ENCODE measurements at regions of chr10 and their contacts with region 1.

Region 1: DNA sequence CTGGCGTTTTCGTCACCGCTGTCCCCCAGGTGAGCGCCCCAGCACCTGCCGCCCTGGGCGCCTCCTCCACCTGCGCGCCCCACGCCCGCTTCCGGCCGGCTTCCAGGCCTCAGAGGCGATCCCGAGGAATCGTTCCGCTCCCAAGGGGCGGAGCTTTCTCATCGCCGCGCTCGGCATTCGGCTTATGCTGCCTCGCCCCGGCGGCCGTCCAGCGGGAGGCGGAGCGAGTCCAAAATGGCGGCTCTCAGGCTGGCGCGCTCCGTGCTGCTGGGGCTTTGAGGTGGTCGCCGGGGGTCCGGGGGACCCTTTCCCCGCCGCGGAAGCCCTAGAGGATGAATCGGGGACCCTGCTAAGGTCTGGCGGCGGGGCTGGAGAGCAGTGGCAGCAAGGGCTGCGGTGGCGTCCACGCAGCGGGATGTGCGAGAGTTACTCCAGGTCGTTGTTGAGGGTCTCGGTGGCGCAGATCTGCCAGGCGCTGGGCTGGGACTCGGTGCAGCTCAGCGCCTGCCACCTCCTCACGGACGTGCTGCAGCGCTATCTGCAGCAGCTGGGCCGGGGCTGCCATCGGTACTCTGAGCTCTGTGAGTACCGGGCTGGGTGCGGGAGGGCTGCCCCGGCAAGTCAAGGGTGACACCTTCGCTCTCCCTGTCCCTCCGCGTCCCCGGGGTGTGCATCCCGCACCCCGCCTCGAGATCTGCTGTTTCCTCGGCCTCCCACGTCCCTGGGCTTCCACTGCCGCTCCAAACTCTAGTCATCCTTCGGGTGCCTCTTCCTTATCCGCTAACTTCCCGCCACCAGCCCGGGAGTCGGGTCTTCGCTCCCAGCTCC is at the start of gene TAF3:
- DNase-seq: peak; percentile 81 to 95 (median 91)
- ATAC-seq: peak; percentile 93 to 95 (median 95)
- H3K4me3 ChIP-seq: peak within 1 kb of the TSS; percentile 93 to 97
- H3K4me3 Mint-ChIP-seq: peak within 1 kb of the TSS; percentile 97 to 99 (median 97)
- H3K27ac ChIP-seq: peak within 1 kb of the TSS; percentile 47
- H3K27ac Mint-ChIP-seq: peak within 1 kb of the TSS; percentile 84 to 89
- H3K4me1 ChIP-seq: peaks cover 9 to 24% of the 10 kb centered on the region in 2 experiments
- H3K4me1 Mint-ChIP-seq: peaks cover 43 to 47% (median 44%) of the 10 kb centered on the region in 3 donors
- H3K27me3 ChIP-seq: peaks cover 0 to 16% of the 10 kb centered on the region in 2 experiments
- H3K27me3 Mint-ChIP-seq: peaks cover 0 to 2% of the 10 kb centered on the region in 2 donors
- total RNA-seq, gene TAF3: 18.2 to 21.8 (median 20.0) TPM

Region 2: DNA sequence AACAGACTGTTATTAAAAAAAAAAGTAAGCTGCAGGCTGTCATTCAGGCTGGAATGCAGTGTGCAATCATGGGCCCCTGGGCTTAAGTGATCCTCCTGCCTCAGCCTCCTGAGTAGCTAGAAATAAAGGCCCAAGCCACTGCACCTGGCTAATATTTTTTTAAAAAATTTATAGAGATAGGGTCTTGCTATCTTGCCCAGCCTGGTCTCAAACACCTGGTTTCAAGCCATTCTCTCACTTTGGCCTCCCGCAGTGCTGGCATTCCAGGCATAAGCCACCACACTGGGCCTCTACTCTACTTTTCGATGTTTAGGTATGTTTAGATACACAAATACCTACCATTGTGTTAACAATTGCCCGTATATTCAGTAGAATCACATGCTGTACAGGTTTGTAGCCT is 968.1 kb before region 1 on chr10:
- CTCF ChIA-PET with region 1: no interaction called
- POLR2A ChIA-PET with region 1: no interaction called
- DNase-seq: no peak
- ATAC-seq: no peak
- H3K4me3 ChIP-seq: no peak overlapping the region
- H3K4me3 Mint-ChIP-seq: no peak overlapping the region
- H3K27ac ChIP-seq: no peak overlapping the region
- H3K27ac Mint-ChIP-seq: no peak overlapping the region
- H3K4me1 ChIP-seq: no peaks in the 10 kb centered on the region
- H3K4me1 Mint-ChIP-seq: no peaks in the 10 kb centered on the region
- H3K27me3 ChIP-seq: peaks cover 0 to 3% of the 10 kb centered on the region in 2 experiments
- H3K27me3 Mint-ChIP-seq: peaks cover 5 to 13% of the 10 kb centered on the region in 2 donors

Region 3: DNA sequence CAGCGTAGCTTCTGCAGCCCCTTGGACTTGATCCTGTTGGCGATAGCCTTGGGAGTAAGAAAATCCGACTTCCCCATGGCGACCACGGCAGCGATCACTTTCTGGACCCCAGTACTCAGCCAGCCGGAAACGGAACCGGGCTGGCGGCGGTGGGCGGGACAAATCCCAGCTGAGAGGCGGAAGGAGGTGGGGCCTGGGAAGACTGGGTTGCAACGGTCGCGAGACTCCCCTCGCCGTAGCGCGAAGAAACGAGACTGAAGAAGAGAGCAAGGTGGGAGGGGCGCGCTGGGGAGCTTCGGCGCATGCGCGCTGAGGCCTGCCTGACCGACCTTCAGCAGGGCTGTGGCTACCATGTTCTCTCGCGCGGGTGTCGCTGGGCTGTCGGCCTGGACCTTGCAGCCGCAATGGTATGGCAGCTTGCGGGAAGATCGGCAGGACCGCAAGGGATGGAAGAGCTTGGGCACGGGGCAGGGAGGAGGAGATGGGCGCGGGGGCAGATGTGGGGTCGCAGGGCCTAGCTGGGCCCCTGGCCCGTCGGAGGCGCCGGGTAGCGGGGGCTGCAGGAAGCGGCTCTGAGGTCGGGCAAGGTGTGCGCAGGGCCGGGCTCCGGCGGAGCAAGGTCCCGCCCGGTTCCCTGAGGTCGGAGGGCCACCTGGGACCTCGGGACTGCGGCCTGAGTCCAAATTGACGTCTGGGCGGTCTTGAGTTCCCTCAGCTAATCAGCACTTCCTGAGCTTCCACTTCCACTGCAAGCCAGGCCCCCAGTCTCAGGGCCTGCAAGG is 30.5 kb before region 1 on chr10 and contains the starts of genes ATP5F1C and KIN:
- CTCF ChIA-PET with region 1: interaction called in 1 of 2 experiments, 13 read pairs
- POLR2A ChIA-PET with region 1: interaction called, 7 to 23 read pairs
- DNase-seq: peak; percentile 93 to 98 (median 96)
- ATAC-seq: peak; percentile 95 to 97 (median 96)
- H3K4me3 ChIP-seq: peak within 1 kb of the TSS; percentile 86 to 93
- H3K4me3 Mint-ChIP-seq: no peak within 1 kb of the TSS
- H3K27ac ChIP-seq: peak within 1 kb of the TSS; percentile 57
- H3K27ac Mint-ChIP-seq: peak within 1 kb of the TSS in 1 of 2 donors; percentile 86
- H3K4me1 ChIP-seq: peaks cover 22 to 25% of the 10 kb centered on the region in 2 experiments
- H3K4me1 Mint-ChIP-seq: peaks cover 41 to 74% (median 70%) of the 10 kb centered on the region in 3 donors
- H3K27me3 ChIP-seq: no peaks in the 10 kb centered on the region
- H3K27me3 Mint-ChIP-seq: no peaks in the 10 kb centered on the region
- total RNA-seq, gene ATP5F1C: 94.4 to 132 (median 111) TPM
- total RNA-seq, gene KIN: 7.1 to 13.3 (median 10.0) TPM

Measured in T-cell (primary cell).